ENCODE measurements at regions of chr15 and their contacts with region 1.

Region 1: GRCh38 chr15:69576035-69576526 is 123.5 kb downstream of the RPLP1 start:
- DNase-seq: peak in 1 of 2 donors; percentile 77
- H3K4me3 ChIP-seq: no peak overlapping the region
- H3K27ac ChIP-seq: no peak overlapping the region
- H3K4me1 ChIP-seq: peaks cover 5 to 12% of the 10 kb centered on the region in 2 donors
- H3K27me3 ChIP-seq: no peaks in the 10 kb centered on the region
- CTCF ChIP-seq: peak; percentile 76 to 84 (median 83)

Region 2: GRCh38 chr15:69357773-69358771 is 218.0 kb before region 1 on chr15:
- intact Hi-C with region 1: no loop called
- DNase-seq: peak in 1 of 2 donors; percentile 51
- H3K4me3 ChIP-seq: no peak overlapping the region
- H3K27ac ChIP-seq: no peak overlapping the region
- H3K4me1 ChIP-seq: no peaks in the 10 kb centered on the region
- H3K27me3 ChIP-seq: no peaks in the 10 kb centered on the region
- CTCF ChIP-seq: no peak

Region 3: GRCh38 chr15:69523010-69524001 is 52.8 kb before region 1 on chr15:
- intact Hi-C with region 1: loop called (anchors 5 kb)
- DNase-seq: peak; percentile 22 to 78
- H3K4me3 ChIP-seq: no peak overlapping the region
- H3K27ac ChIP-seq: no peak overlapping the region
- H3K4me1 ChIP-seq: no peaks in the 10 kb centered on the region
- H3K27me3 ChIP-seq: no peaks in the 10 kb centered on the region
- CTCF ChIP-seq: peak; percentile 46 to 67 (median 59)

Region 4: GRCh38 chr15:69593981-69594966 is 18.2 kb after region 1 on chr15:
- intact Hi-C with region 1: loop called (anchors 2 kb)
- DNase-seq: peak; percentile 58 to 89
- H3K4me3 ChIP-seq: peak overlapping the region; percentile 18 to 43
- H3K27ac ChIP-seq: peak overlapping the region; percentile 87 to 91
- H3K4me1 ChIP-seq: peaks cover 18 to 38% of the 10 kb centered on the region in 2 donors
- H3K27me3 ChIP-seq: no peaks in the 10 kb centered on the region
- CTCF ChIP-seq: no peak

Region 5: GRCh38 chr15:69652751-69653305 is 76.7 kb after region 1 on chr15:
- intact Hi-C with region 1: loop called (anchors 2 kb)
- DNase-seq: peak in 1 of 2 donors; percentile 65
- H3K4me3 ChIP-seq: no peak overlapping the region
- H3K27ac ChIP-seq: no peak overlapping the region
- H3K4me1 ChIP-seq: no peaks in the 10 kb centered on the region
- H3K27me3 ChIP-seq: no peaks in the 10 kb centered on the region
- CTCF ChIP-seq: peak; percentile 19 to 68 (median 53)

Region 6: GRCh38 chr15:70466895-70467529 is 890.9 kb after region 1 on chr15:
- intact Hi-C with region 1: loop called (anchors 5 kb)
- DNase-seq: no peak
- H3K4me3 ChIP-seq: no peak overlapping the region
- H3K27ac ChIP-seq: no peak overlapping the region
- H3K4me1 ChIP-seq: no peaks in the 10 kb centered on the region
- H3K27me3 ChIP-seq: no peaks in the 10 kb centered on the region
- CTCF ChIP-seq: peak; percentile 32 to 57 (median 32)

Region 7: GRCh38 chr15:70488002-70488605 is 912.0 kb after region 1 on chr15:
- intact Hi-C with region 1: loop called (anchors 5 kb)
- DNase-seq: peak in 1 of 2 donors; percentile 87
- H3K4me3 ChIP-seq: no peak overlapping the region
- H3K27ac ChIP-seq: no peak overlapping the region
- H3K4me1 ChIP-seq: no peaks in the 10 kb centered on the region
- H3K27me3 ChIP-seq: no peaks in the 10 kb centered on the region
- CTCF ChIP-seq: peak; percentile 92 to 99 (median 98)

Measured in ascending aorta (tissue), 2 donors.